ENCODE measurements at regions of chr17 and their contacts with region 1.

Region 1: DNA sequence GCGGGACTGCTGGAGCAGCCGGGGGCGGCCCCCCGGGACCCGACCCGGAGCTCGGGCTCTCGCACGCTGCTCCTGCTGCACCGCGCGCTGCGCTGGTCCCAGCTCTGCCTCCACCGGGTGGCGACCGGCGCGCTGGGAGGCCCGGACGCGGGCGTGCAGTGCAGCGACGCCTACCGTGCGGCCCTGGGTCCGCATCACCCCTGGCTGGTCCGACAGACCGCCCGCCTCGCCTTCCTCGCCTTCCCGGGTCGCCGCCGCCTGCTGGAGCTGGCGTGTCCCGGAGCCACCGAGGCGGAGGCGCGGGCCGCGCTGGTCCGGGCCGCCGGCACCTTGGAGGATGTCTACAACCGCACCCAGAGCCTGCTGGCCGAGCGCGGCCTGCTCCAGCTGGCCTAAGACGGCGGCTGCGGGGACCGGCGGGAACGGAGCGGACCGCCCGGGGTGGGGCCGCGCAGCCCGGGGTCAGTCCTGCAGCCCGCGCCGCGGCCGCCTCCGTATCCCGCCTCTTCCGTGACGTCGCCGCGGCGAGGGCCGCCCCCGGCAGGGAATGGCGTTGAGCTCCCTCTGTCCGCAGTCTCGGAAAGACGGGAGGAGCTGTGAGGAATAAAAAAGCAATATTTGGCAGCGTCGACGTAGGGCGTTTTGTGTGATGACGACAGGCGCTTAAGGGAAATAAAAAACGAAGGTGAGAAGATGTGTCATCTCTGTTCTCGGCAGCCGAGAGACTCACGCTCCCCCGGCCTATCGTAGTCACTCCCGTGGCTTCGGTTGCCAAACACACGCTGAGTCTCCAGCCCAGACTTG is 1.3 kb downstream of the GLTPD2 start:
- DNase-seq: peak; percentile 17
- H3K4me3 ChIP-seq: peak overlapping the region; percentile 67
- CTCF ChIP-seq: peak; percentile 93

Region 2: GRCh38 chr17:4616476-4616875 is 173.6 kb before region 1 on chr17:
- CTCF ChIA-PET with region 1: no interaction called
- POLR2A ChIA-PET with region 1: no interaction called
- DNase-seq: no peak
- H3K4me3 ChIP-seq: no peak overlapping the region
- CTCF ChIP-seq: no peak

Region 3: DNA sequence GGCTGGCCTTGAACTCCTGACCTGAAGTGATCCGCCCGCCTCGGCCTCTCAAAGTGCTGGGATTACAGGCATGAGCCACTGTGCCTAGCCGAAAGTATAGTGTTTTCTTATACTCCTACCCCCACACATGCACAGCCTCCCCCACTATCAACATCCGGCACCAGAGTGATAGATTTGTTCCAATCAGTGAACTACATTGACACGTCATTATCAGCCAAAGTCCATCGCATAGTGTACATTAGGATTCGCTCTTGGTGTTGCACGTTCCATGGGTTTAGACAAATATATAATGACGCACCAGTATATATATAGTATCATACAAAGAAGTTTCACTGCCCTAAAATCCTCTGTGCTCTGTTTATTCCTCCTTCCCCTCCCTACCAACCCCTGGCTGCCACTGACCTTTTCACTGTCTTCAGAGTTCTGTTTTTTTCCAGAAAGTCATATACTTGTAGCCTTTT is 30.3 kb before region 1 on chr17:
- CTCF ChIA-PET with region 1: interaction called, 10 read pairs
- POLR2A ChIA-PET with region 1: no interaction called
- DNase-seq: no peak
- H3K4me3 ChIP-seq: no peak overlapping the region
- CTCF ChIP-seq: no peak

Region 4: GRCh38 chr17:4806777-4807604 is 16.9 kb after region 1 on chr17 and contains the start of gene PLD2:
- CTCF ChIA-PET with region 1: interaction called, 28 read pairs
- POLR2A ChIA-PET with region 1: interaction called, 6 read pairs
- DNase-seq: no peak
- H3K4me3 ChIP-seq: peak within 1 kb of the TSS; percentile 72
- CTCF ChIP-seq: no peak

Region 5: DNA sequence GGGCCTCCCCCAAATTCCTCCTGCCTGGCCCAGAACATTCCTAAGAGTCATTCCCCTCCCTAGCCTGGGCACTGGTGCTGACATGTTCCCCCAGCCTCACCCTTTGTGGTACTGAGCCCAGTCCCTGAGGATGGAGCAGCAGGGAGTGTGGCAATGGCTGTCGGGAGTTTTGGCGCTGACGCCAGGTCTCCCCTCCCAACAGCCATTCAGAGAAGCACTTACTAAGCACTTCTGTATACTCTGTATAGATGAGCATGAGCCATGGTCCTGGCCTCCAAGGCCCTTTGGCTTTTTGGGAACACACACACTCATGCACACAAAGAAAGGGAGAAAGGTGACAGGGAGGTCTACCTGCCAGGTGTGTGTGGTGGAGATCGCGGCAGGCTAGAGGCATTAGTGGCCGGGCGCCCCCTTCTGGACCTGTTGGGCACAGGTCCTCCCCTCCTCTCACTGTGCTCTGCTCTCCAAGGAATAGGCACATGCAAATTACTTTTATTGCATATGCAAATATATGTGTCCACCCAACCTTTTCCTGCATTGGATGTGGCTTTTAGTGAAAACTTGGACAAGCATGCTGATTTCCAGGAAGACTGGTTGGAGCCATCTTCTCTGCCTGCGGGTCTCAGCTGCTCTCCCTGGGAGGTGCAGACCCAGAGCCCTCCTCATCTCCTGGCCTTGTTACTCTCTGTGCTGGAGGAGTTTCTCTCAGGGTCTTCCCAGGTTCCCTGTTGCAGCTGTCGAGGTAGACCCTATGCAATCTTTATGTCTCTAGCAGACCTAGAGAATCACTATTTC is 91.9 kb after region 1 on chr17:
- CTCF ChIA-PET with region 1: interaction called, 154 read pairs
- POLR2A ChIA-PET with region 1: no interaction called
- DNase-seq: no peak
- H3K4me3 ChIP-seq: no peak overlapping the region
- CTCF ChIP-seq: peak; percentile 83

Region 6: GRCh38 chr17:4903051-4903818 is 113.1 kb after region 1 on chr17 and contains the start of gene CHRNE:
- CTCF ChIA-PET with region 1: interaction called, 52 read pairs
- POLR2A ChIA-PET with region 1: interaction called, 3 read pairs
- DNase-seq: no peak
- H3K4me3 ChIP-seq: no peak within 1 kb of the TSS
- CTCF ChIP-seq: peak; percentile 79